H1 (cell line): ENCODE measurements at regions of chr15 and their contacts with region 1.

Region 1: DNA sequence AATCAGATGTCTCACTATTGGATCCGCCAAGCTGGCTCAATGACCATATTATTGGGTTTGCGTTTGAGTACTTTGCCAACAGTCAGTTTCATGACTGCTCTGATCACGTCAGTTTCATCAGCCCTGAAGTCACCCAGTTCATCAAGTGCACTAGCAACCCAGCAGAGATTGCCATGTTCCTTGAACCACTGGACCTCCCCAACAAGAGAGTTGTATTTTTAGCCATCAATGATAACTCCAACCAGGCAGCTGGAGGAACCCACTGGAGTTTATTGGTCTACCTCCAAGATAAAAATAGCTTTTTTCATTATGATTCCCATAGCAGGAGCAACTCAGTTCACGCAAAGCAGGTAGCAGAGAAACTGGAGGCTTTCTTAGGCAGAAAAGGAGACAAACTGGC is 21.5 kb downstream of the SENP8 start:
- DNase-seq: no peak
- H3K4me3 ChIP-seq: no peak overlapping the region
- H3K27ac ChIP-seq: no peak overlapping the region
- H3K4me1 ChIP-seq: no peaks in the 10 kb centered on the region
- H3K27me3 ChIP-seq: no peaks in the 10 kb centered on the region
- CTCF ChIP-seq: no peak
- EP300 ChIP-seq: no peak
- POLR2A ChIP-seq: no peak
- RAD21 ChIP-seq: no peak

Region 2: DNA sequence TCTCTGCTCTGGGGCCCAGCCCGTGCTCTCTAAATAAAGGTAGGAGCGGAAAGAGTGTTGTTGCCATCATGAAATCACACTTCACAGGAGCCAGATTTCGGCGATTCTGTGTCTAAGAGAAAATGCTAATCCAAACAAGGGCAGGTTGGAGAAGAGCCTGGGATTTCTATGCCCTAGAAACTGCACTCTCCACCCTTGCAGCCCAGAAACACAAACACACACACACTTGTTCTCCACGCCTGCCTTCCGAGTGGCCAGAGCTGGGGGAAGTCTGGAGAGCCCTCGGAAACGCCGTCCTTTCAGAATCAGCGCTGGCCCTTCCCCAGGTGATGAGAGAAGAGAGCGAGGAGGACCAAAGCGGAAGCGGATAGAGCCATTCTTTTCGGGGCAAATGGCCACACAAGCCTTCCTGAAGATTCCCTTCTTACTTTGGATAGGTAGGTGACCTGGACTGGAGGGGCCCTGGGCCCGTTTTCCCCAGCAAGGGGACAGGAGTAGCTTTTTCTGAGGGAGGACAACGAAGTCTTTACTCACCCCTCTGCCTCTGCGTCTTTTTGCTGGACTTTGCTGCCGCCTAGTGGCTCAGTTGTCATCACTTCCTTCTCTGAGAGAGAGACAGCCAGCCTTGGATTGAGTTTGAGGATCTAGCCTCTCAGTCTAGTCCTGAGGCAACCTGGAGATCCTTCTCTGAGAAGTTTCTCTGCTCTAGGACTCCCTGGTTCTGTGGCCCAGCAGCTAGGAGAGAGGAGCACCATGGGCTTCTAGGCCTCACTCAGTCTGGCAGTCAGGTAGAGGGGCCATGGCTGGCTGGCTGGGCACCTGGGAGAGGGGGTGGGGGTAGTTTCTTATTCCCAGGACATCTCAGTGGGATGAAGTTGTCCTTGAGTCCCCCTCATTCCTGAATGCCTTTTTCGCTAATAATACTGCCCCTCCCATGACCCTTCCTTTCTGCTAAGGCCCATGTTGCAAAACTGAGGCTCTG is 16.3 kb after region 1 on chr15:
- CTCF ChIA-PET with region 1: interaction called, 11 read pairs
- POLR2A ChIA-PET with region 1: no interaction called
- DNase-seq: peak; percentile 27 to 92
- H3K4me3 ChIP-seq: peak overlapping the region in 3 of 4 experiments; percentile 10 to 40 (median 16); a peak in 3 of 8 replicates
- H3K27ac ChIP-seq: no peak overlapping the region
- H3K4me1 ChIP-seq: no peaks in the 10 kb centered on the region
- H3K27me3 ChIP-seq: peaks cover 0 to 4% (median 0%) of the 10 kb centered on the region in 4 experiments; a peak in 2 of 7 replicates
- CTCF ChIP-seq: peak; percentile 64 to 95 (median 88)
- EP300 ChIP-seq: no peak
- POLR2A ChIP-seq: no peak
- RAD21 ChIP-seq: peak; percentile 97 to 98